ENCODE measurements at regions of chr10 and their contacts with region 1.

Region 1: DNA sequence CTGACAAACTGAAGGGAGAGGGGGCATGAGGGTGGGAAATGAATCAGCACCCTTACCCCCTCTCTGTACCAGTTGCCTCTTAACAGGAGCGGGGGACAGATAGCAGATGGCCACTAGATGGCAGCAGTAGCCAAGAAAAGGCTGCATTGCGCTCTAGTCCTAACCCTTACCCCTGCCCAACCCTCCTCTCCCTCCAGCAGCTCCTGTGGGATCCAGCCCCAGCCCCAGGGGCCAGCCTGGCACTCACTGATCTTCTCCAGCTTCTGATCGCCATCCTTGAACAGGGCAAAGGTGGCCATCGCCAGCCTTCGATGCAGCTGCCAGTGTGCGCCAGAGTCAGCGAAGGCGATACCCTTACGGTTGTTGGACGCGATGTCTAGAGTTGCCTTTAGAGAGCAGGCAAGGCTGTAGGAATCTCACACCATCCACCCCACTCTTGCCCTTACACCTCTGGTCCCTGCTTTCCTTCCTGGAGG is 2.2 kb downstream of the CYP17A1 start:
- DNase-seq: peak; percentile 85
- H3K4me3 Mint-ChIP-seq: no peak overlapping the region
- H3K27ac Mint-ChIP-seq: no peak overlapping the region
- H3K4me1 Mint-ChIP-seq: no peaks in the 10 kb centered on the region
- H3K27me3 Mint-ChIP-seq: peaks cover 3% of the 10 kb centered on the region

Region 2: DNA sequence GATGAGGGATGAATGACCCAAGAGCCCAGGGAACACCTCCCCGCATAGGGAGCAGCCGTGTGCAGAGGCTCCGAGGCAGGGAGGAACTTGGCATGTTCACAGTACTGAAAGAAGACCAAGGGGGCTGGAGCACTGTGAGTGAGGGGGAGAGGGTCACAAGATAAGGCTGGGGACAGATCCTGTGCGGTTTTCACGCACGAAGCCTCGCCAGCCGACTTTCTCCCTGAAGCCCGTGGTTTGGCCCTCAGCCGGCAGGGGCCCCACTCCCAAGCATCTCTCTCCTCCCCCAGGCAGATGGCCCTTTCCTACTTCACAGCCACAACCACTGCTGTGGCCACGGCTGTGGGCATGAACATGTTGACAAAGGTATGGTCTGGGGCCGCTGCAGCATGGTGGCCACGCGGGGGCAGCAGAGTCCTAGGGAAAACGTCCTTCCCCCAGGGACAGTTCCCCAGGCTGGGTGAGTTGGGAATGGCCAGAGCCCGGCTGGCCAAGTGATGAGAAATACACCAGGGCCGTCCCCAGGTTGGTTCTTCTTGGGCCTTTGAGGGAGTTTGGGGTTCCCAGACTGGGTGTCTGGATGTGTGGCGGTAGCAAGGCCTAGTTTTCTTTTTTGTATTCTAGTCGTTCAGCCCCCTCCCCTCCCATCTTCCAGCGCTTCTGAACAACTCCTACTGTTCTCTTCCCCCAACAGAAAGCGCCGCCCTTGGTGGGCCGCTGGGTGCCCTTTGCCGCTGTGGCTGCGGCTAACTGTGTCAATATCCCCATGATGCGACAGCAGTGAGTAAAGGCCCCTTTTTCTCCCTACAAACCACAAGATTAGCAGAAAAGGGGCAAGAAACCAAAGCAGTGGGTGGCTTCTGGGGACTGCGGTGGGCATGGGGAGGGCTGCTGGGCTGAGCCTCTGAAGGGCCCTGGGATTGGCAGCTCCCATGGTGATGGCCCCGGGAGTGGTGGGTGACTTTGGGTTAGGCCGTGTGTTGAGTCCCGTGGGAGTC is 105.7 kb before region 1 on chr10:
- CTCF ChIA-PET with region 1: interaction called, 5 read pairs
- intact Hi-C with region 1: loop called (anchors 5 kb)
- DNase-seq: peak; percentile 71
- H3K4me3 Mint-ChIP-seq: no peak overlapping the region
- H3K27ac Mint-ChIP-seq: no peak overlapping the region
- H3K4me1 Mint-ChIP-seq: no peaks in the 10 kb centered on the region
- H3K27me3 Mint-ChIP-seq: no peaks in the 10 kb centered on the region

Region 3: GRCh38 chr10:102904346-102904745 is 69.3 kb after region 1 on chr10:
- CTCF ChIA-PET with region 1: interaction called, 54 read pairs
- intact Hi-C with region 1: loop called (anchors 1 kb)
- DNase-seq: no peak
- H3K4me3 Mint-ChIP-seq: no peak overlapping the region
- H3K27ac Mint-ChIP-seq: no peak overlapping the region
- H3K4me1 Mint-ChIP-seq: no peaks in the 10 kb centered on the region
- H3K27me3 Mint-ChIP-seq: no peaks in the 10 kb centered on the region

Region 4: DNA sequence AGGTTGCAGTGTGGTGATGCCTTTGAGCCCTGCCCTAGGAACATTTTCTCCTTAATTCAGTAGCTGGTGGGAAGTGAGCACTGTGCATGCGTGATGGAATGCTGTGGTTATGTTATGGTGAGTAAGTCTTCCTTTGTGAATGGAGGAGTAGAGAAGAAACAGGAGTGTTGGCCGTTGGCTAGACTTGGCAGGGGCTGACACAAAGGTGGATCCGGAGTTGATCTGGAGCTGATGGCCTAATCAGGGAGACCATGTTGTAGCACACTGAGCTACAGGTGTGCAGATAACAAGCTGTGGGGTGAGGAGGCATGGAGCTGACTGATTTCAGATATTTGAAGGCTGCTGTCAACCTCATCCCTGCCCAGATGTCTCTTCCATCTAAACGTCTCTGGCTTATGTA is 205.4 kb after region 1 on chr10:
- CTCF ChIA-PET with region 1: no interaction called
- intact Hi-C with region 1: no loop called
- DNase-seq: no peak
- H3K4me3 Mint-ChIP-seq: no peak overlapping the region
- H3K27ac Mint-ChIP-seq: no peak overlapping the region
- H3K4me1 Mint-ChIP-seq: no peaks in the 10 kb centered on the region
- H3K27me3 Mint-ChIP-seq: no peaks in the 10 kb centered on the region

Region 5: GRCh38 chr10:103069453-103070331 is 234.6 kb after region 1 on chr10:
- CTCF ChIA-PET with region 1: interaction called, 3 read pairs
- intact Hi-C with region 1: loop called (anchors 1 kb)
- DNase-seq: peak; percentile 83
- H3K4me3 Mint-ChIP-seq: no peak overlapping the region
- H3K27ac Mint-ChIP-seq: no peak overlapping the region
- H3K4me1 Mint-ChIP-seq: peaks cover 17% of the 10 kb centered on the region
- H3K27me3 Mint-ChIP-seq: no peaks in the 10 kb centered on the region

Region 6: DNA sequence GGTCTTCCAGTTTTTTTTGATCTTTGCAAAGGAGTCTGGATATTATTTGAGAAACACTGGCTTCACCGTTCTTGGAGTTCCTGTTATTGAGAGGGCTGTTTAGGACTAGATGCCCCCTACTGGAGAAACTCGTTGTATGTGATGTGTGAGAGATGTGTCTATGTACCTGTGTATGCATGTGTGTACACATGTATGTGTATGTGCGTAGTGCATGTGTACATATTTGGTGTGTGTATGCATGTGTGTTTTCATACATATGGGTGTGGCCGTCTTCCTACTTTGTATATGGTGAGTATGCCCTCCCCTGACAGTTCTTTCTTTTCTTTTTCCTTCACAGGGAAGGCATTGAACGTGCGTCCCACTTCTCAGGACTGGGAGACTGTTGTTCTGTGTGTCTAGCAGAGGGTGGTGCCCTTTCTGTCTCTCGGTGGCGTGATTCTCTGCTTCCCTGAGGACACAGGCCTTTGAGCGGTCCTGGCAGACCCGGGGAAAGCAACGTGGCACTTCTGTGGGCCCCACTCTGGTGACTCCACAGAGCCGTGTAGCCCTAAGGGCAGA is 647.0 kb after region 1 on chr10:
- CTCF ChIA-PET with region 1: interaction called, 3 read pairs
- intact Hi-C with region 1: loop called (anchors 10 kb)
- DNase-seq: peak; percentile 41
- H3K4me3 Mint-ChIP-seq: no peak overlapping the region
- H3K27ac Mint-ChIP-seq: no peak overlapping the region
- H3K4me1 Mint-ChIP-seq: no peaks in the 10 kb centered on the region
- H3K27me3 Mint-ChIP-seq: no peaks in the 10 kb centered on the region